H1 (cell line): ENCODE measurements at regions of chr2 and their contacts with region 1.

Region 1: GRCh38 chr2:231227309-231228162 is 29.1 kb downstream of the ARMC9 start:
- DNase-seq: peak in 1 of 2 experiments; percentile 29
- H3K4me3 ChIP-seq: no peak overlapping the region
- H3K27ac ChIP-seq: no peak overlapping the region
- H3K4me1 ChIP-seq: peaks cover 0 to 7% (median 4%) of the 10 kb centered on the region in 4 experiments
- H3K27me3 ChIP-seq: no peaks in the 10 kb centered on the region
- CTCF ChIP-seq: peak; percentile 65 to 91 (median 89)
- EP300 ChIP-seq: no peak
- POLR2A ChIP-seq: no peak
- RAD21 ChIP-seq: peak; percentile 95 to 96

Region 2: GRCh38 chr2:230842473-230842872 is 385.1 kb before region 1 on chr2:
- CTCF ChIA-PET with region 1: no interaction called
- POLR2A ChIA-PET with region 1: no interaction called
- DNase-seq: no peak
- H3K4me3 ChIP-seq: no peak overlapping the region
- H3K27ac ChIP-seq: no peak overlapping the region
- H3K4me1 ChIP-seq: no peaks in the 10 kb centered on the region
- H3K27me3 ChIP-seq: no peaks in the 10 kb centered on the region; a peak in 1 of 7 replicates
- CTCF ChIP-seq: no peak
- EP300 ChIP-seq: no peak
- POLR2A ChIP-seq: no peak
- RAD21 ChIP-seq: no peak

Region 3: DNA sequence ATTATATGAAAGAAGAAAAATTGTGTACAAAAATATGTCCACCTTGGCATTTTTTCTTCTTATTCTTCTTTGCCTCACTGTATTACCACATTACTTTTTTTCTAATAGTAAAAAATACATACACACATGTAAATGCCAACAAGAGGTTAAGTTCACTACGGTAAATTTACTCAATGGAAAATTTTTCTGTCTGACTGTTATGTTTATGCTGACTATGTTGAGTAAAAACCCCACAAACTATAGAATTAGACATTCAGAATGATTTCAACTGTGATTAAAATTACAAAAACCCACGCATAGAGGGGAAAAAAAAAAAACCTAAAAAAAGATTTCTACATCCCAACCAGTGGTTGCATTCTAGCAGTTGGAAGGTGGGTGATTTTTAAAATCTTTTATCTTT is 307.9 kb before region 1 on chr2:
- CTCF ChIA-PET with region 1: no interaction called
- POLR2A ChIA-PET with region 1: no interaction called
- DNase-seq: no peak
- H3K4me3 ChIP-seq: no peak overlapping the region
- H3K27ac ChIP-seq: no peak overlapping the region
- H3K4me1 ChIP-seq: peaks cover 0 to 3% (median 2%) of the 10 kb centered on the region in 4 experiments; a peak in 2 of 7 replicates
- H3K27me3 ChIP-seq: no peaks in the 10 kb centered on the region
- CTCF ChIP-seq: no peak
- EP300 ChIP-seq: no peak
- POLR2A ChIP-seq: no peak
- RAD21 ChIP-seq: no peak

Region 4: DNA sequence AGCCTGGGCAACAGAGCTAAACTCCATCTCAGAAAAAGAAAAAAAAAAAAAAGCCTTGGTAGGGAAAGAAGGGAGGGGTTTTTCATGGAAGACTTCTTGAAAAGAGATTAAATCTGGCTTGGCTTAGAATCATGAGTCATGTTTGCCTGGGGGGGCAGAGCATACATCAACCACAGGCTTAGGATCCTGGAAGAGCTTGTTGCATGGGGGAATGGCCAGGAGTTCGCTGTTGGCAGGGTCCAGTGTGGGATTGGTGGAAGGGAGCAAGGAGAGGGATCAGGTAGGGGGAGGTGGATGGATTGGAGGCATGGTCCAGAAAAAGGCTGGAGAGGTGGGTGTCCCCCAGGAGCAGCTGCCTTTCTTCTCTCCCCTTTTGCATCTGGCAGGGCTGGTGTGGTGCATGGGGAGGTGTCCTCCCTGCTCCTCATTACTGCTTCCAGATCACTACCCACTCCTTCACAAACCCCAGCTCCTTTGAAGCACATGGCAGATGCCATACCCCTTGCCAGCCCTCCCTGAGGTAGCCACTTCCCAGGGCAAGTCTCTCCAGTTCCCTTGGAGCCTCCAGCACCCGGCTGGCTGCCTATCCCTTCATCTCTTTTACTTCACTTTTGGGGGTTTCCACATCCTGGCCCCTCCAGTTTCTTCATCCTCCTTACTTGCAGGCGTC is 26.6 kb before region 1 on chr2:
- CTCF ChIA-PET with region 1: interaction called, 14 read pairs
- POLR2A ChIA-PET with region 1: no interaction called
- DNase-seq: no peak
- H3K4me3 ChIP-seq: no peak overlapping the region
- H3K27ac ChIP-seq: no peak overlapping the region
- H3K4me1 ChIP-seq: peaks cover 0 to 5% (median 2%) of the 10 kb centered on the region in 4 experiments; a peak in 3 of 7 replicates
- H3K27me3 ChIP-seq: no peaks in the 10 kb centered on the region
- CTCF ChIP-seq: no peak
- EP300 ChIP-seq: no peak
- POLR2A ChIP-seq: no peak
- RAD21 ChIP-seq: no peak

Region 5: GRCh38 chr2:231238689-231239088 is 11.2 kb after region 1 on chr2:
- CTCF ChIA-PET with region 1: interaction called, 78 read pairs
- POLR2A ChIA-PET with region 1: interaction called, 7 read pairs
- DNase-seq: no peak
- H3K4me3 ChIP-seq: no peak overlapping the region
- H3K27ac ChIP-seq: no peak overlapping the region
- H3K4me1 ChIP-seq: no peaks in the 10 kb centered on the region
- H3K27me3 ChIP-seq: no peaks in the 10 kb centered on the region
- CTCF ChIP-seq: no peak
- EP300 ChIP-seq: no peak
- POLR2A ChIP-seq: no peak
- RAD21 ChIP-seq: no peak

Region 6: DNA sequence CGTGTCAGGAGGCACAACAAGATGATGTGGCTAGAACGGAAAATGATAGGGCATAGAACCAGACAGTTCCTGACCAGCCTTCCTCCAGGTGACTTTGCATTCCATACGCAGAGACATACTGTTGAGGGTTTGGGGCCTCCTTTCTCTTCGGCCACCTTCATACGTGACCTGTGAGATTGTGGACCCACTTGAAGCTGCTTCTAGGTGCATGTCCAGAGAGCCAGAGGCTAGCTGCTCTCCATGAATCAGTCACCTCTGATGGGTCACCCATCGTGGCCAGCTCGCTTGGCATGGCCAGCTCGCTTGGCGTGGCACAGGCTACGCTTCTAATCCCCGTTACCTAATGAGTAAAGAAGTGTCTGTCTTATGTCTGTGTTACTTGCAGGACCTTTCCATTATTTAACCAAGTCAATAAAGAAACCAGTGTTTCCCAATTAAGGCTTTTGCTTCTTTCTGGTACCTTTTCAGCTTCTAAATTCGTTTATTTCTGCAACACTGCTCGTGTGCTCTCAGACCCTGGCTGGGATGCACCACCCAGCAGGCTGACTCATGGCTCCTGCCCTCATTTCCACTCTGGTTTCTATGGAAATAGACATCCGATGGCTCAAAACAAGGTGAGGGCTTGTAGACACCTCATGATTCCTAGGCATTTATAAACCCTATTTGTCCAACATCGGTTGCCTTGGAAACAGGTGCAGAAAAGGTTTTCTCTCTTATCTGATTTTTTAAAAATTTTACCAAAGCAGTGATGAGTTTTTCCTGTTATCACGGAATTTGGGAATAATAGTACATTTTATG is 81.3 kb after region 1 on chr2:
- CTCF ChIA-PET with region 1: interaction called, 10 read pairs
- POLR2A ChIA-PET with region 1: no interaction called
- DNase-seq: no peak
- H3K4me3 ChIP-seq: no peak overlapping the region
- H3K27ac ChIP-seq: no peak overlapping the region
- H3K4me1 ChIP-seq: no peaks in the 10 kb centered on the region; a peak in 1 of 7 replicates
- H3K27me3 ChIP-seq: no peaks in the 10 kb centered on the region
- CTCF ChIP-seq: no peak
- EP300 ChIP-seq: no peak
- POLR2A ChIP-seq: no peak
- RAD21 ChIP-seq: no peak

Region 7: DNA sequence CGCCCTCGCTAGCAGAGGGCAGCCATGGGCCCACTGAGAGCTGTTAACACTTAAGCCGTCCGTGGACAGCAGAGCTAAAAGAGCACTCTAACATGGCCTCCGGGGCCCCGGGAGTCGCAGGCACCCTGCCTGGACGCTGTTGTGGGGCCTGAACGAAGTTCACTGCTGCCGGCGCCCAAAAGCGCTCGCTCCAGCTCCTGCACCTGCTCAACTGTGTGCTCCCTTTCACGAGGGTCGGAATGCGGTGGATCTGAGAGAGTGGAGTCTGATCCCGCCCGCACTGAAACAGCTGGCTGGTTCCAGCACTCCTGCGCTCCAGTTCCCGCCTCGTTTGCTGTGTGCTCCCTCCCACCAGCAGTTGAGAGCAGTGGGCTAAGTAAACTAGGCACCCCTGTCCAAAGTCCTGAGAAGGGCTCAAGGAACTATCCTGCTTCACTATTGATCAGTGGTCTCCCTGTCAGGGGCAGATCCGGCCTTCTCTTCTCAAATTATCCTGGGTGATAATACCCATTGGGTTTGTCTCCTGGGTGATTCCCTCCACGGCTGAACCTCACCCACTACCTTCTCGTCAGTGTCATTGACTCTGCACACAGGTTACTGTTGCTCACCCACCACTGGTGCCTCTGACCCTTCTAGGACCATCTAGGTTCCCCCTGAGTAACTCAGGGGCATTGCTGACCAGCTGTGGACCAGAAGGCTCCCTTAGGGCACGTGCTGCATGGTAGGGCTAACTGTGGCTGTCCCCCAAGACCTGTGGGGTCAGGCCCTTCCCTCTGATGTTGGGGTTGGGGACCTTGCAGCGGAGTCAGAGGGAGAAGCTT is 191.5 kb after region 1 on chr2:
- CTCF ChIA-PET with region 1: interaction called, 218 read pairs
- POLR2A ChIA-PET with region 1: interaction called, 7 read pairs
- DNase-seq: no peak
- H3K4me3 ChIP-seq: no peak overlapping the region
- H3K27ac ChIP-seq: no peak overlapping the region
- H3K4me1 ChIP-seq: peaks cover 1 to 6% (median 4%) of the 10 kb centered on the region in 4 experiments; a peak in 6 of 7 replicates
- H3K27me3 ChIP-seq: no peaks in the 10 kb centered on the region
- CTCF ChIP-seq: no peak
- EP300 ChIP-seq: no peak
- POLR2A ChIP-seq: no peak
- RAD21 ChIP-seq: no peak